ENCODE measurements at regions of chr4 and their contacts with region 1.

Region 1: GRCh38 chr4:158253350-158253980 is 43.2 kb downstream of the TMEM144 start:
- DNase-seq: peak; percentile 87
- H3K4me3 ChIP-seq: no peak overlapping the region
- H3K27ac ChIP-seq: no peak overlapping the region
- H3K4me1 ChIP-seq: no peaks in the 10 kb centered on the region
- H3K27me3 ChIP-seq: no peaks in the 10 kb centered on the region
- CTCF ChIP-seq: peak; percentile 86

Region 2: GRCh38 chr4:157992038-157992705 is 261.3 kb before region 1 on chr4:
- CTCF ChIA-PET with region 1: no interaction called
- POLR2A ChIA-PET with region 1: no interaction called
- intact Hi-C with region 1: loop called (anchors 1 kb)
- DNase-seq: peak; percentile 82
- H3K4me3 ChIP-seq: peak overlapping the region; percentile 27
- H3K27ac ChIP-seq: no peak overlapping the region
- H3K4me1 ChIP-seq: peaks cover 18% of the 10 kb centered on the region
- H3K27me3 ChIP-seq: no peaks in the 10 kb centered on the region
- CTCF ChIP-seq: peak; percentile 78

Region 3: GRCh38 chr4:158065176-158065575 is 188.3 kb before region 1 on chr4:
- CTCF ChIA-PET with region 1: no interaction called
- POLR2A ChIA-PET with region 1: no interaction called
- intact Hi-C with region 1: no loop called
- DNase-seq: peak; percentile 2
- H3K4me3 ChIP-seq: no peak overlapping the region
- H3K27ac ChIP-seq: no peak overlapping the region
- H3K4me1 ChIP-seq: no peaks in the 10 kb centered on the region
- H3K27me3 ChIP-seq: no peaks in the 10 kb centered on the region
- CTCF ChIP-seq: peak; percentile 25; the same call in 1 of the 2 replicates

Region 4: DNA sequence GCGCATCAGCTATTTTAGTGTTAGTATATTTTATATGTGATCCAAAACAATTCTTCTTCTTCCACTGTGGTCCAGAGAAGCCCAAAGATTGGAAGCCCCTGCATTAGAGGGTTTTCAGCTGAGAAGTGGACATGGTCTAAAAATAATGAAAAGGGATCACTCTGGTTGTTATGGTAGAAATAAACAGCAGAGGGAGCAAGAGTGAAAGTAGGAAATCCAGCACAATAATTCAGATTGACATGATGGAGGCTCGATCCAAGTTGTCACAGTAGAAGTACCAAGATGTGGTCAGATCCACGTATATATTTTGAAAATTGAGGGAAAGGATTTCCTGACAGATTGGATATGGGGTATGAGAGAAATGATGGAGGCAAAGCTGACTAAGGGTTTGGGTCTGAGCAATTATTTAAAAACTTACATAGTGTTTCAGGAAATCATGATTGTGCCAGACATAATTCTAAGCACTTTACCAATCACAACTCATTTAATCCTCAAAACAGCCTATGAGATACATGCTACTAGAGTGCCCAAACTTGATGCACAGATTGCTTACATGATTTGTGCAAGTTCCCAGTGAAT is 60.2 kb before region 1 on chr4:
- CTCF ChIA-PET with region 1: interaction called, 6 read pairs
- POLR2A ChIA-PET with region 1: no interaction called
- intact Hi-C with region 1: loop called (anchors 1 kb)
- DNase-seq: peak; percentile 70
- H3K4me3 ChIP-seq: no peak overlapping the region
- H3K27ac ChIP-seq: no peak overlapping the region
- H3K4me1 ChIP-seq: no peaks in the 10 kb centered on the region
- H3K27me3 ChIP-seq: no peaks in the 10 kb centered on the region
- CTCF ChIP-seq: peak; percentile 78

Region 5: GRCh38 chr4:159201168-159201567 is 947.7 kb after region 1 on chr4:
- CTCF ChIA-PET with region 1: no interaction called
- POLR2A ChIA-PET with region 1: no interaction called
- intact Hi-C with region 1: loop called (anchors 5 kb)
- DNase-seq: peak; percentile 21
- H3K4me3 ChIP-seq: no peak overlapping the region
- H3K27ac ChIP-seq: no peak overlapping the region
- H3K4me1 ChIP-seq: no peaks in the 10 kb centered on the region
- H3K27me3 ChIP-seq: no peaks in the 10 kb centered on the region
- CTCF ChIP-seq: no peak

Region 6: DNA sequence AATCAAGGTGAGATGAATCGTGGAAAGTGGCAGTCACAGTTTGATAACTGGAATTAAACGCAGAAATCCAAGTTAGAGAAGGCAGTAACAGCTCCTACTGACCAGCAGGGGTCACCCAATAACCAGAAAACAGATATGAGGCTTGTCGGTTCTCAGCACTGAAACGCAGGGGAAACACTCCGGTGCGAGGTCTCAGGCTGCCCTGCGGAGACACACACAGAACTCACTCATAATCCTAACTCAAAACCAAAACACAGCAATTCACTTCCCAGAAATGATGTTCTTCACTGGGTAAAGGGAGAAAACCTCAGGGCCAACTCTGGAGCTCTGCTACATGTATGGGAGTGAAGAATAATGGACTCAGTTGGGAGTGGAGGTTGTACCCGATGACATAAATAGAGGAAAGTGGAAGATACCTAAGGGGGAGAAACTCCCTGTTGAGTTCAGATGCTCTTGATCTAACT is 1233.9 kb after region 1 on chr4:
- CTCF ChIA-PET with region 1: interaction called, 11 read pairs
- POLR2A ChIA-PET with region 1: no interaction called
- intact Hi-C with region 1: loop called (anchors 1 kb)
- DNase-seq: peak; percentile 95
- H3K4me3 ChIP-seq: no peak overlapping the region
- H3K27ac ChIP-seq: no peak overlapping the region
- H3K4me1 ChIP-seq: peaks cover 10% of the 10 kb centered on the region
- H3K27me3 ChIP-seq: no peaks in the 10 kb centered on the region
- CTCF ChIP-seq: peak; percentile 98

Region 7: GRCh38 chr4:159608437-159608836 is 1355.0 kb after region 1 on chr4:
- CTCF ChIA-PET with region 1: no interaction called
- POLR2A ChIA-PET with region 1: no interaction called
- intact Hi-C with region 1: loop called (anchors 10 kb)
- DNase-seq: peak; percentile 87
- H3K4me3 ChIP-seq: no peak overlapping the region
- H3K27ac ChIP-seq: peak overlapping the region; percentile 1
- H3K4me1 ChIP-seq: peaks cover 14% of the 10 kb centered on the region
- H3K27me3 ChIP-seq: no peaks in the 10 kb centered on the region
- CTCF ChIP-seq: peak; percentile 56